Naive thymus-derived CD4-positive, alpha-beta T cell (primary cell): ENCODE measurements at regions of chr15 and their contacts with region 1.

Region 1: DNA sequence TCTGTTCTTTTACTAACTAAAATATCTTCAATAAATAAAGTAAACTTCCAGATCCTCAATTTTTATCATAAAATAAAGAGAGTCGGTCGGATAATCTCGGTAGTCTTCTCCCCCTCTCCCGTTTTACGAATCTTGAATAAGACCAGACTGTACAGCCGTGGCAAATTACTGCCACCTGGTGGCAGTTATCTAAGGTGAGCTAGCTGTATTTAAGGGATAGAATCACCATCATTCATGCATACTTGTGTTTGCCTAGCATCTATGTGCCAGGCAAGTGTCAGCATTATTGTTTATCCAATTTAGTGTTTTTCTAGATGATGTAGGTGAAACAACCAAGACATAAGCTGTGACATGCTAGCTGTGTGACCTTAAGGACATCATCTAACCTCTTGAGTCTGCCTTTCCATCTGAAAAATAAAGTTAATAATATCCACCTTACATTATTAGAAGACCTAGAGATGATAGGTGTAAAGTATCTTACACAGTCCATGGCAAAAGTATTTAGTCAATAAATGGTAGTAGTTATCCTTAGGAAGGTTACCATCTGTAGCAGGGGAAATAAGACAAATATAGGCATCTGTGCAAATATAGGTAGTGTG is 21.3 kb downstream of the DUT start:
- DNase-seq: peak in 8 of 9 donors; percentile 23 to 57 (median 42)
- ATAC-seq: peak; percentile 83
- H3K4me3 ChIP-seq: no peak overlapping the region
- H3K4me3 Mint-ChIP-seq: peak overlapping the region in 3 of 10 donors; percentile 23 to 61 (median 26)
- H3K27ac ChIP-seq: no peak overlapping the region
- H3K27ac Mint-ChIP-seq: no peak overlapping the region
- H3K4me1 ChIP-seq: no peaks in the 10 kb centered on the region
- H3K4me1 Mint-ChIP-seq: peaks cover 0 to 5% (median 4%) of the 10 kb centered on the region in 7 donors
- H3K27me3 ChIP-seq: no peaks in the 10 kb centered on the region
- H3K27me3 Mint-ChIP-seq: peaks cover 0 to 7% (median 2%) of the 10 kb centered on the region in 5 donors

Region 2: DNA sequence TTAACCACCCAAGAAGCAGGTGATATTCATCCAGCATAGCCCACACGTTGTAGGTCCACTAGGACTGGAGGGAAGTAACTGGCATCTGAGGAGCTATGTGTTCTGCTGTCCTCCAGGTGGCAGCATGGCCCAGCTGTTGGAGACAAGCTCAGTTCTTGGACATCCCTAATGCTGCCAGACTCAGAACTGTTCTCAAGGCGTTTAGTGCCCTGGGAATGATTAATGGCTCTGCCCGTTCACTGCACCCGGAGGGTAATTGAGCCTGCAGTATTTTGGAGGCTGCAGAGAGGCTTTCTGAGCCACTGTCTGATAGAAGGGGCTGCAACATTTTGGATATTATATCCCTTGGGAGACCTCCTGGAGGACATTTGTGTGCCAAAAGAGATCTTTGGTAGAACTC is 1156.5 kb before region 1 on chr15:
- CTCF ChIA-PET with region 1: interaction called, 6 read pairs
- POLR2A ChIA-PET with region 1: no interaction called
- intact Hi-C with region 1: loop called in 1 of 2 experiments (anchors 1 kb)
- DNase-seq: peak in 7 of 9 donors; percentile 9 to 34 (median 19)
- ATAC-seq: peak; percentile 57
- H3K4me3 ChIP-seq: no peak overlapping the region
- H3K4me3 Mint-ChIP-seq: no peak overlapping the region
- H3K27ac ChIP-seq: no peak overlapping the region
- H3K27ac Mint-ChIP-seq: no peak overlapping the region
- H3K4me1 ChIP-seq: no peaks in the 10 kb centered on the region
- H3K4me1 Mint-ChIP-seq: no peaks in the 10 kb centered on the region
- H3K27me3 ChIP-seq: no peaks in the 10 kb centered on the region
- H3K27me3 Mint-ChIP-seq: peaks cover 2 to 31% (median 8%) of the 10 kb centered on the region in 5 donors

Region 3: GRCh38 chr15:47917881-47918280 is 434.7 kb before region 1 on chr15:
- CTCF ChIA-PET with region 1: no interaction called
- POLR2A ChIA-PET with region 1: no interaction called
- intact Hi-C with region 1: no loop called
- DNase-seq: no peak
- ATAC-seq: no peak
- H3K4me3 ChIP-seq: no peak overlapping the region
- H3K4me3 Mint-ChIP-seq: no peak overlapping the region
- H3K27ac ChIP-seq: no peak overlapping the region
- H3K27ac Mint-ChIP-seq: no peak overlapping the region
- H3K4me1 ChIP-seq: no peaks in the 10 kb centered on the region
- H3K4me1 Mint-ChIP-seq: no peaks in the 10 kb centered on the region
- H3K27me3 ChIP-seq: no peaks in the 10 kb centered on the region
- H3K27me3 Mint-ChIP-seq: peaks cover 0 to 13% (median 4%) of the 10 kb centered on the region in 5 donors

Region 4: GRCh38 chr15:48285329-48286214 is 67.0 kb before region 1 on chr15:
- CTCF ChIA-PET with region 1: no interaction called
- POLR2A ChIA-PET with region 1: no interaction called
- intact Hi-C with region 1: loop called (anchors 1 to 5 kb)
- DNase-seq: peak in 8 of 9 donors; percentile 7 to 51 (median 34)
- ATAC-seq: peak; percentile 72
- H3K4me3 ChIP-seq: no peak overlapping the region
- H3K4me3 Mint-ChIP-seq: peak overlapping the region in 5 of 10 donors; percentile 23 to 53 (median 33)
- H3K27ac ChIP-seq: no peak overlapping the region
- H3K27ac Mint-ChIP-seq: peak overlapping the region in 1 of 9 donors; percentile 16
- H3K4me1 ChIP-seq: no peaks in the 10 kb centered on the region
- H3K4me1 Mint-ChIP-seq: peaks cover 0 to 12% (median 5%) of the 10 kb centered on the region in 7 donors
- H3K27me3 ChIP-seq: no peaks in the 10 kb centered on the region
- H3K27me3 Mint-ChIP-seq: peaks cover 0 to 20% (median 11%) of the 10 kb centered on the region in 5 donors

Region 5: DNA sequence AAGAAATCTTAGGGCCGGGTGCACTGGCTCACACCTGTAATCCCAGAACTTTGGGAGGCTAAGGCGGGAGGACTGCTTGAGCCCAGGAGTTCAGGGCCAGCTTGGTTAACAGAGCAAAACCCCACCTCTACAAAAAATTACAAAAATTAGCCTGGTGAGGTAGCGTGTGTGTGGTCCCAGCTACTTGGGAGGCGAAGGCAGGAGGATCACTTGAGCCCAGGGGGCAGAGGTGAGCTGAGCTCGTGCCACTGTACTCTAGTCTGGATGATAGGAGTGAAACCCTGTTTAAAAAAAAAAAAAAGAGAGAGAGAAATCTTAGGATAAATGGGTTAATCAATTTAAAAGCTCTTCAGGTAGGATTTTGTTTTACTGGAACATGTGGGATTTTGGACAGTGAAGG is 52.5 kb before region 1 on chr15:
- CTCF ChIA-PET with region 1: no interaction called
- POLR2A ChIA-PET with region 1: no interaction called
- intact Hi-C with region 1: loop called in 1 of 2 experiments (anchors 5 kb)
- DNase-seq: no peak
- ATAC-seq: no peak
- H3K4me3 ChIP-seq: no peak overlapping the region
- H3K4me3 Mint-ChIP-seq: no peak overlapping the region
- H3K27ac ChIP-seq: no peak overlapping the region
- H3K27ac Mint-ChIP-seq: no peak overlapping the region
- H3K4me1 ChIP-seq: no peaks in the 10 kb centered on the region
- H3K4me1 Mint-ChIP-seq: no peaks in the 10 kb centered on the region
- H3K27me3 ChIP-seq: no peaks in the 10 kb centered on the region
- H3K27me3 Mint-ChIP-seq: peaks cover 0 to 27% (median 4%) of the 10 kb centered on the region in 5 donors

Region 6: GRCh38 chr15:48340111-48340510 is 12.5 kb before region 1 on chr15:
- CTCF ChIA-PET with region 1: interaction called, 10 read pairs
- POLR2A ChIA-PET with region 1: no interaction called
- intact Hi-C with region 1: no loop called
- DNase-seq: no peak
- ATAC-seq: no peak
- H3K4me3 ChIP-seq: no peak overlapping the region
- H3K4me3 Mint-ChIP-seq: no peak overlapping the region
- H3K27ac ChIP-seq: no peak overlapping the region
- H3K27ac Mint-ChIP-seq: peak overlapping the region in 2 of 9 donors; percentile 29 to 45
- H3K4me1 ChIP-seq: no peaks in the 10 kb centered on the region
- H3K4me1 Mint-ChIP-seq: peaks cover 0 to 29% (median 0%) of the 10 kb centered on the region in 7 donors
- H3K27me3 ChIP-seq: no peaks in the 10 kb centered on the region
- H3K27me3 Mint-ChIP-seq: no peaks in the 10 kb centered on the region

Region 7: DNA sequence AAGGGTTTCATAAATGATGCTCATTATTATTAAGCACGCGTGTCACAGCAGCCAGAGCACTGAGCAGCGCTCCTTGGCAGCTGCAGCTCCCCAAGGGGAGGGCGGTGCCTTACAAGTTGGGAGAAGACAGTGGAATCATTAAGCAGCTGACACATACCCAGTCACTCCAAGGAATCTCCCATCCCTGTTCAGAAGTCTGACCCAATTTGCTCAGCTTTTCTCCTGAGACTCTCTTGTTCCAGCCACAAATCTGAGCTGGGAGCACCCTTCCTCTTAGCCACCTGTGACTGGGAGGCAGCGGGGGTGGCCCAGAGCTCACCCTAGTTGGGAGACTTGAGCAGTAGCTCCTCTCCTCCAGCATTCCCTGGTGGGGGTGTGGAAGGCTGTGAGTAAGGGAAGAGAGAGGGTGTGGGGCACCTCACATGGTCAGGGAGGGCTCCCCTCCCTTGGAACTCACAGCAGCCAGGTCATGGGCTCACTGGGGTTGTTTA is 43.0 kb after region 1 on chr15:
- CTCF ChIA-PET with region 1: no interaction called
- POLR2A ChIA-PET with region 1: no interaction called
- intact Hi-C with region 1: no loop called
- DNase-seq: no peak
- ATAC-seq: no peak
- H3K4me3 ChIP-seq: no peak overlapping the region
- H3K4me3 Mint-ChIP-seq: no peak overlapping the region
- H3K27ac ChIP-seq: no peak overlapping the region
- H3K27ac Mint-ChIP-seq: no peak overlapping the region
- H3K4me1 ChIP-seq: no peaks in the 10 kb centered on the region
- H3K4me1 Mint-ChIP-seq: no peaks in the 10 kb centered on the region
- H3K27me3 ChIP-seq: no peaks in the 10 kb centered on the region
- H3K27me3 Mint-ChIP-seq: peaks cover 3 to 20% (median 9%) of the 10 kb centered on the region in 5 donors